ENCODE measurements at regions of chr1 and their contacts with region 1.

Region 1: DNA sequence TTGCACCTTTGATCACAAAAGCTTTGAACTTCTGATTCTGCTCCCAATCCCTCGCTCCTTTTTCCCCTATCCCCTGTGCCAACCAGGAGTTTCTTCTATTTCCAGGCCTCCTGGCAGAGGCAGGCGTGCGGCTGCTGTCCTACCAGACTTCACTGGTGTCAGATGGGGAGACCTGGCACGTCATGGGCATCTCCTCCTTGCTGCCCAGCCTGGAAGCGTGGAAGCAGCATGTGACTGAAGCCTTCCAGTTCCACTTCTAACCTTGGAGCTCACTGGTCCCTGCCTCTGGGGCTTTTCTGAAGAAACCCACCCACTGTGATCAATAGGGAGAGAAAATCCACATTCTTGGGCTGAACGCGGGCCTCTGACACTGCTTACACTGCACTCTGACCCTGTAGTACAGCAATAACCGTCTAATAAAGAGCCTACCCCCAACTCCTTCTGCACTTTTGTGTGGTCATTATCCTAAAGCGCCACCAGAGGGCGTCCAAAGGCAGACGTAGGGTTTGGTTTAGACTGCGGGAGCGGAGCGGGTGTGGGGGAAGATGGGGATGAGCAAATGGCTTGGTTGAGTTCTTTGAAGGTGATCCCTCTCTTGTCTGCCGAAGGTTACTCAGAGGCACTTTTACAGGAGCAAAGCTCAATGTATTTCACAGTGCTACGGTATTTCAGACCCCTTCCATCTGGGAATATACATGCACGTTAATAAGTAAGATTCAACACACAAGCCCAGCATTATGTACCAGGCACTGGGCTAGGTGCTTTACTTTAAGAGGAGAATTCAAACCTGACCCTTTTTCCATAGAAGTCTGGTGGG is 24.7 kb downstream of the HMGCS2 start:
- DNase-seq: peak in 9 of 10 donors; percentile 47 to 78 (median 69)
- H3K4me3 ChIP-seq: no peak overlapping the region
- H3K27ac ChIP-seq: peak overlapping the region in 51 of 59 donors; percentile 1 to 97 (median 64)
- H3K27me3 ChIP-seq: no peaks in the 10 kb centered on the region
- CTCF ChIP-seq: peak; percentile 67 to 92 (median 84)

Region 2: GRCh38 chr1:119799599-119800177 is 55.7 kb after region 1 on chr1:
- intact Hi-C with region 1: loop called in 1 of 2 experiments (anchors 5 kb)
- DNase-seq: no peak
- H3K4me3 ChIP-seq: no peak overlapping the region
- H3K27ac ChIP-seq: no peak overlapping the region
- H3K27me3 ChIP-seq: no peaks in the 10 kb centered on the region
- CTCF ChIP-seq: no peak

Region 3: GRCh38 chr1:119870917-119871596 is 127.1 kb after region 1 on chr1:
- intact Hi-C with region 1: loop called in 1 of 2 experiments (anchors 5 kb)
- DNase-seq: peak; percentile 38 to 89 (median 78)
- H3K4me3 ChIP-seq: peak overlapping the region in 55 of 59 donors; percentile 7 to 66 (median 44)
- H3K27ac ChIP-seq: peak overlapping the region in 3 of 59 donors; percentile 35 to 59 (median 44)
- H3K27me3 ChIP-seq: no peaks in the 10 kb centered on the region
- CTCF ChIP-seq: peak; percentile 51 to 97 (median 88)

Region 4: GRCh38 chr1:119968068-119968492 is 224.1 kb after region 1 on chr1:
- intact Hi-C with region 1: loop called in 1 of 2 experiments (anchors 10 kb)
- DNase-seq: peak in 5 of 10 donors; percentile 28 to 61 (median 47)
- H3K4me3 ChIP-seq: no peak overlapping the region
- H3K27ac ChIP-seq: no peak overlapping the region
- H3K27me3 ChIP-seq: no peaks in the 10 kb centered on the region
- CTCF ChIP-seq: peak; percentile 23 to 81 (median 68)

Measured in dorsolateral prefrontal cortex (tissue), 120 donors.